Activated T-helper 2 cell treated with anti-CD3 and anti-CD28 coated beads, Interferon-gamma antibody, Interleukin-2, Interleukin-4, amounts not matched to agents 10 μg/mL and 5 μg/mL and 100 μg/mL, durations not matched to agents 14 hours and 24 hours and 36 hours (primary cell): ENCODE measurements at regions of chr3 and their contacts with region 1.

Region 1: DNA sequence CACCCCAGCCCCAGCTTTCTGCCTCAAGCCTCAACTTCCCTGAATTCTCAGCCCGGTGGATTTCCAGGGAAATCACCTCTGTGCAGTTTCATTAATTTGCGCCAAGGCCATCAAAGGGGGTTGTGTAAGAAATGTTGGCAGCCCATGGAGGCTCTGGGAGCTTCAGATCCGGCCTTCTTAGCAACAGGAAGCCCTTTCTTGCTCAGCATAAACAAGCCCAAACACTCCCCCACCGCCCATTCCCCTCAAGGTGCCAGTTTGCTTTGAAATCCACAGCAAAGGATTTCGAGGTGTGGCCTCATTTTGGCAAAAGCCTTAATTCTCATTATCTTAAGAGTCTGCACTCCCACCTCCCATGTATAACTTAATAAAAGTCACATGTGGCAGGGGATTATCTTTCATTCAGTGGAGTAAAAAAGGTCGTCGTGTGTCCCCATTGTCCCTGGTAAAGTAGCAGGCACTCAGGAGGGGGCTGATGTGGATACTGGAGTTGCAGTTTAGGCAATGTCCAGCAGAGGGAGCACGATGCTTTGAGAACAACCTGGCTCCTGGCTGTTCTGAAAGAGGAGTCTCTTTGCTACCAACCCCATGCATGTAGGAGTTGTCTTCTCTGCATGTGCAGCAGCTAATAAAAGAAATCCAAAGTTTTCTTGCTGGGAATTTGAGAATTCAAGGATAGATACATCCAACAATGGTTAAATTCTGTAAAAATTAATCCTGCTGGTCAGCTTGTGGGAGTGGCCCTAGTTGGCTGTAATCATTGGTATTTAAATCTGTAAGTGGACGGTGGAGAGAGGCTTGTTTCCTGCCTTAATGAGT is 39.5 kb downstream of the EBLN2 start:
- DNase-seq: peak; percentile 51
- H3K4me3 Mint-ChIP-seq: no peak overlapping the region
- H3K27ac Mint-ChIP-seq: no peak overlapping the region
- H3K4me1 Mint-ChIP-seq: no peaks in the 10 kb centered on the region
- H3K27me3 Mint-ChIP-seq: peaks cover 2% of the 10 kb centered on the region

Region 2: DNA sequence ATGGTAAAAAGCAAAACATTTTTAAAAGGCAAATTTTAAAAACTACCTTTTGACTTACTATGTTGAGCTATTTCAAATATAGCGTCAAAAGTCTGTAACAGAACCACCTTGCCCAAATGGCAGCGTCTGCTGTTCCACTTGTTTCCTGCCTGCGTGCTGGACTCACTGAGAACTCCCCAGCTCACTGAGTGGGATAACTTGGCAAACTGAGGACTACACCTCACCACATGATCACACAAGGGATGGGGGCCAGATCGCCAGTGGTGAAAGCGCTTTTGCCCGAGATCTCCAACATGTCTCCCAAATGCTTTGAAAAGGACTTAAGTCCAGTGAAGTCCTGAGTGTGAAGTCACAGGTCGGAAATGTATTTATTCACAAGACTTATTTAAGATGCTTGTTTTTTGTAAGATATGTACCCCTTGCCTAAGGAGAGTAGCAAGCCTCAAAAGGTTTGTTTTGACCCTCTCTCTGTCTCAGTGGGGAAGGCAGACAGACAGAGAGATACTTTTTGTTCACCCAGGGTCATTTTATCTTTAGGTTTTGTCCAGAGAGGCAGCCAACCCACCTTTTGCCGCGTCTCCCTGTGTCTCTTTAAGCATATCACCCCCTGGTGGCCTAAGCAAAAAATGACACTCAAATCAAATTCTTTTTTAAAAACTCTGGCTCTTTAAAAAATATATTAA is 331.2 kb after region 1 on chr3:
- intact Hi-C with region 1: loop called (anchors 2 kb)
- DNase-seq: no peak
- H3K4me3 Mint-ChIP-seq: no peak overlapping the region
- H3K27ac Mint-ChIP-seq: no peak overlapping the region
- H3K4me1 Mint-ChIP-seq: no peaks in the 10 kb centered on the region
- H3K27me3 Mint-ChIP-seq: peaks cover 3% of the 10 kb centered on the region

Region 3: DNA sequence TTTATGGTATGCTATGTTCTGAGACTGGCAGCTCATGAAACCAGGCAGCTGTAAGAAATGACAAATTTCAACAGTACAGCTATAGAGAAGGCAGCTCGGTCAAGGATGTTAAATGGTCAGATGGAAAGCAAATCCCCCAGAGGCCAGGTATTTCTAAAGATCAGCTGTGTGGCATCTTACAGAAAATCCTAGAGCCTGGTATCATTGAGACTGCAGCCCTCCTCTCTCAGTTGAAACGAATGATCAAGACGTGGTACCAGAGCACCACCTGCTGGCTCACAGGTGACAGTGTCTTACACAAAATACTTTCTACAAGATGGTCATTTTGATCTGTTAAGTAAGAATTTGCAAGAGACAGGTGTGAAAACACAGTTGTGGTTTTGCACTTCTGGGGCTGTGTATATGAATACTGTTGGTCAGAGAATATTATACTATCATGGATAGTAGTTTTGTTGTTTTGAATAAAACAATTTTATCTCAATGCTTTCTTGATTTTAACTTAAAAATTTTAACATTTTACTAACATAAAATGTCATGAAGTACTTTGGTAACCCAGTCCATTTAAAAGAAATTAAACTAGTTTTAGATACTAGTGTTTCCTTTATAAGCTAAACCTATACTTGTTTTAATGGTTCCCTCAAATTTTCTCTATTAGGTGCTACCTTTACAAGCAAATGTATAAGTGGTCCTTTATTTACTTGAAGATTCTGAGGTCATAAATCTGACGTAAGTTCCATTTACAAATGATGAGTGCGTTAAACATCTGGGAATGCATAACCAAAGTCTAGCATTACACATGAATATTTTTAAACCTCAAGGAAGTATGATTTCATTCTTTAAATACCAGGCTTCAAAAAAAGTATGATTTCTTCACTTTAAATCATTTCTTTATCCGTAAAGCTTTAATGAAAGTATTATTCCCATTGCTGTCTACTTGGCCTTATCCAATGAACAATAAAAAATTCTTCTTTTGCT is 401.9 kb after region 1 on chr3:
- intact Hi-C with region 1: loop called (anchors 1 kb)
- DNase-seq: no peak
- H3K4me3 Mint-ChIP-seq: no peak overlapping the region
- H3K27ac Mint-ChIP-seq: no peak overlapping the region
- H3K4me1 Mint-ChIP-seq: no peaks in the 10 kb centered on the region
- H3K27me3 Mint-ChIP-seq: no peaks in the 10 kb centered on the region